Esophagus muscularis mucosa (tissue), 4 donors: ENCODE measurements at regions of chr11 and their contacts with region 1.

Region 1: DNA sequence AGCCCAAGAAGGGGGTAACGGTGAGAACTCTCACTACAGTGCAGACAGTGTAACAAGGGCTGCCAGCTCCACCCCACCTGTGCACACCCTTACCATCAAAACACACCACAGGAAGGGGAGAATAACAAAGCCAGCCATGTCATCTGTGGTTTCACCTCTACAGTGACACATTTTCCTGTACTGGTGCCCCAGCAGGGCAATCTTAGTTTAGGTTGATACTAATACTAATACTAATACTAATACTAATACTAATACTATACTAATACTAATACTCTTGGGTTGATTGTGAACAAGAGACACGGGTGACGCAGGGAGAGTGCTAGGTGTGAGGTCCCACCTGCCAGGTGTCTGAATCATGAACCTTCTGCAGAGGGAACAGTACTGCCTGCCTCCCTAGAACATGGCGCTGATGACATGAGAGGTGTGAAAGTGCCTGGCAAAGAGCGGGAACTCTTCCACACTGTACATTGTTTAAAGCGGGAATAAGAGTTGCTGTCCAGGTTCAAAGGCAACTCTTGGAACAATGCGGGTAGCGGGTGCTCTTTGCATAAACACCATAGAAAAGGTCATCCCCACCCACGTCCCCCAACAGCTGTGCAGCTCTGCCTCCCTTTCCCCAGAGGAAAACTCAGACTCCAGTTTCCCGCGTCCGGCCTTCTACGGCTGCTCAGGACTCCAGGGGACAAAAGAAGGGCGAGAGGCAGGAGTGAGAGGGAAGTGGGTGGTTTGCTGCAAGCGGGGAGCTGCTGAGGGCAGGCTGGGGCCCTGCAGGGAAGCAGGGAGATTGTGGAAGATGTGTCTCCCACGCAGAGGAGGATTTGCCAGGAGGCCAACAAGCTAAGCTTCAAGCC is 25.0 kb upstream of the TMPRSS4 start:
- DNase-seq: peak; percentile 66
- H3K4me3 ChIP-seq: no peak overlapping the region
- H3K27ac ChIP-seq: no peak overlapping the region
- H3K4me1 ChIP-seq: peaks cover 0 to 3% (median 0%) of the 10 kb centered on the region in 4 donors
- H3K27me3 ChIP-seq: peaks cover 0 to 5% (median 0%) of the 10 kb centered on the region in 4 donors
- CTCF ChIP-seq: no peak
- EP300 ChIP-seq: no peak
- POLR2A ChIP-seq: no peak

Region 2: DNA sequence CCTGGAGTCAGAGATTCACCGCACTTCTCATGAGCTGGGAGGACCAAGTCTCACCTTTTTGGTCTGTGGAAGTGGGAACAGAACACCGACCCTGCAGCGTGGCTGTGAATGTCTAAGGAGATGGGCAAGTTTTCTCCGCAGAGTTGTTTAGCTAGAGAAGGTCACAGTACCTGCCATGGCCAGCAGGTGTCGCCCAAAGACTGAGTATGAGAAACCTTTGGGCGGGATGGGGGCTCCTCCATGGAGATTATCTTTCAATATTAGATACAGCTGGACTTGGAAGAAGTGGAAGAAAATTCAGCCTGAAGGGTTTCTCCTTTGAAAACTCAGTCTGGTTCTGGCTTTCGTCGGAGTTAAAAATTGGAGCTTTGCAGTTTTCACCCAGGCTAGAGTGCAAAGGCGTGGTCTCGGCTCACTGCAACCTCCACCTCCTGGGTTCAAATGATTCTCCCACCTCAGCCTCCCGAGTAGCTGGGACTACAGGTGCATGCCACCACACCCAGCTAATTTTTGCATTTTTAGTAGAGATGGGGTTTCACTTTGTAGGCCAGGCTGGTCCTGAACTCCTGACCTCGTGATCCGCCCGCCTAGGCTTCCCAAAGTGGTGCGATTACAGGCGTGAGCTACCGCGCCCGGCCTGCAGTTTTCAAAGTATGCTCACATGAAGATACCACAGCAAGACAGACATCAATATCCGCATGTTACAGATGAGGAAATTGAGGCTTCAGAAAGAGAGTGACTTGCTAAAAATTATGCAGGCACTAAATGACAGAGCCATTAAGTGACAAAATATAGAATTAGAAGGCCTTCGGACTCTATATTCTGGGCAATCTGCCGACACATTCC is 244.1 kb before region 1 on chr11:
- intact Hi-C with region 1: loop called (anchors 5 kb)
- DNase-seq: peak; percentile 95
- H3K4me3 ChIP-seq: no peak overlapping the region
- H3K27ac ChIP-seq: no peak overlapping the region
- H3K4me1 ChIP-seq: peaks cover 0 to 23% (median 17%) of the 10 kb centered on the region in 4 donors
- H3K27me3 ChIP-seq: peaks cover 0 to 24% (median 0%) of the 10 kb centered on the region in 4 donors
- CTCF ChIP-seq: peak; percentile 88 to 91 (median 91)
- EP300 ChIP-seq: no peak
- POLR2A ChIP-seq: no peak

Region 3: DNA sequence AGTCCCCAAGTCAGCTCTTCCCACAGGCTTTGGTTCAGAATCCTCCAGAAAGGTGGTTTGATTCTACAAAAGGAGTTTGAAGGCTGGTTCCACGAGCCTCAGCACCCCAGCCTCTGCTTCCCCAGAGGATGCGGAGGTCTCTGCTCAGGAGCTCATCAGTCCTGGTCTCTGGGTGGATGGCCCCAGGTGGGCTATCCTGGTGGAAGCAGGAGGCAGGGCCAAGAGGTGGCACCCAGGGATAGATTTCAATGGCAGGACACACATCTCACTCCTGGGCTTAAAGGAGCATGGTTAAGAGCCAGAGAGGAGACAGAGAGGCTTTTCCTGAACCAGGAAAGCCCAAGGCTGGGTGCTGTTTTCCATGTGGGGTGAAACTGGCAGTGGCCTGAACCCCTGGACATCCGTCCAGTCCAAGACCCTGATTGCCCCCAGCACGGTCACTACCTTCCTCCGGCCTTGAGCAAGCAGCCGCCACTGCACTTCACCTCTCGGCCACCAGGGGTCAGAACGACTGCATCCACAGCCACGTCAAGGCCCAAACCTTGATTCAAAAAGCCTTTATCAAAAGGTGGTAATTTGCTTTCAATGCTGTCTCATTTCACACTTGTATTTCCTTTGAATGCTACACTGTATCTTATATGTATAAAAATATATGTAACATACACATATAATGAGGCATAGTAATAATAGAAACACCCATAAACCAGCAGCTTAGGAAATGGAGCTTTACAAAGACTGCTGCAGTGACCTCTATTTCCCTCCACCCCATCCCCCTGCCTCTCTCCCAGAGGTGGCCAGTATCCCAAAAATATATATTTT is 208.0 kb before region 1 on chr11:
- intact Hi-C with region 1: loop called (anchors 10 kb)
- DNase-seq: no peak
- H3K4me3 ChIP-seq: no peak overlapping the region
- H3K27ac ChIP-seq: no peak overlapping the region
- H3K4me1 ChIP-seq: peaks cover 9 to 20% (median 14%) of the 10 kb centered on the region in 4 donors
- H3K27me3 ChIP-seq: no peaks in the 10 kb centered on the region
- CTCF ChIP-seq: peak; percentile 99 to 100 (median 99)
- EP300 ChIP-seq: no peak
- POLR2A ChIP-seq: no peak